ENCODE measurements at regions of chr15 and their contacts with region 1.

Region 1: DNA sequence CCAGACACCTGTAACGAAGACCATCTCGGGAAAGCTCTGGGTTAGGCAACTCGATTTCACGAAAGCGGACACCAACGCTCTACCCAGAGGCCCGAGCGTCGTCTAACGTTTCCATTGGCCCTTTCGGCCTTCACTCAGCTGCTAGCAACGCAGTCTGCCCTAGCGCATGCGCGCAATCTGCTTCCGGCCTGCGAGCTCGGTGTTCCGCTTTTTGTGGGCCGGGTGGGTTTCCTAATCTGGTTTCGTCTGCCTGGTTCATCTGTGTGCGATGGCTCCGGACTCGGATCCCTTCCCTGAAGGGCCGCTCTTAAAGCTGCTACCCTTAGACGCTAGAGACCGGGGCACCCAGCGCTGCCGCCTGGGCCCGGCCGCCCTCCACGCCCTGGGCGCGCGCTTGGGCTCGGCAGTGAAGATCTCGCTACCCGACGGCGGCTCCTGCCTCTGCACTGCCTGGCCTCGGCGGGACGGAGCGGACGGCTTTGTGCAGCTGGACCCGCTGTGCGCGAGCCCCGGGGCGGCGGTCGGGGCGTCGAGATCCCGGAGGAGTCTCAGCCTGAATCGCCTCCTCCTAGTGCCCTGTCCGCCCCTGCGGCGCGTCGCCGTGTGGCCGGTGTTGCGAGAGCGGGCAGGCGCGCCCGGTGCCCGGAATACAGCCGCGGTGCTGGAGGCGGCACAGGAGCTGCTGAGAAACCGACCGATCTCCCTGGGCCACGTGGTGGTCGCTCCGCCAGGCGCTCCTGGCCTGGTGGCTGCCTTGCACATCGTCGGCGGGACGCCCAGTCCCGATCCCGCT is 24.0 kb upstream of the GATM start:
- DNase-seq: peak; percentile 96
- ATAC-seq: peak; percentile 97
- H3K4me3 Mint-ChIP-seq: peak overlapping the region; percentile 97
- H3K27ac Mint-ChIP-seq: peak overlapping the region; percentile 93
- H3K4me1 Mint-ChIP-seq: peaks cover 27% of the 10 kb centered on the region
- H3K27me3 Mint-ChIP-seq: no peaks in the 10 kb centered on the region
- CTCF ChIP-seq: no peak

Region 2: DNA sequence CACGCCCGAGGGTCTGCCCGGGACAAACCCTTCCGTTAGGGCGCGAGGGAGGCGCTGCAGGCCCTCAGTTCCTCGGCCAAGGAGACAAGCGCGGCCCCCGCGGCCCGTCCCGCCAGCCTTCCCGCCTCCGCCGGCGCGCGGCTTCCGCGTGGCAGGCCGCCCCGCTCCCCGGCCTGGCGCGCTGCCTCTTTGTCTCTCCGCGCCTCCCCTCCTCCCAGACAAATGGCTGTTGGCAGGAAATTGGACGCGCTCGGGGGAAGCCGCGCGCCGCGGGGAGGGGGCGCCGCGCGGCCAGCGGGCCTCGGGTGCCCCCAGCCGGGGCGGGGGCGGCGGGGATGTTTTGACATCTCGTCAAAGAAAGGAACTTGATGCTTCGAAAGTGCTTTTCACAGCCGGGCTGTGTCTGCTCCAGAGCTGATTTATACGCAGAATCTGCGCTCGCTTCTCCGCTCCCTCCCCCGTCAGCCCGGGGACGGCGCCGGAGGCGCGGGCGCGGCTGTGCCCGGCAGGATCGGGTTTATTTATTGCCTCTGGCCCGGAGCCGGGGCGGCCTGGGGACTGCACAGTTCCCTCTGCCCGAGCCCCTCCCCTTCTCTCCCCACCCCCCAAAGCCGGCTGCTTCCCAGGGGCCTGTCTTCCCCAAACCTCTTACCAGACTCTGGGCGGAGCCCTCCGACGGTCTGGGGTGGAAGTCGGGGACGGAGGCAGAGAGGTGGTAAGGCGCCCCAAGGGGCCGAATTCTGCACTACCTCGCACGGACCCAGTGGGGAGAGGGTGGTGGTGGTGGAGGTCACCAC is 235.3 kb before region 1 on chr15:
- CTCF ChIA-PET with region 1: interaction called, 27 read pairs
- POLR2A ChIA-PET with region 1: interaction called, 5 read pairs
- intact Hi-C with region 1: no loop called
- DNase-seq: peak; percentile 89
- ATAC-seq: peak; percentile 91
- H3K4me3 Mint-ChIP-seq: peak overlapping the region; percentile 63
- H3K27ac Mint-ChIP-seq: peak overlapping the region; percentile 75
- H3K4me1 Mint-ChIP-seq: peaks cover 14% of the 10 kb centered on the region
- H3K27me3 Mint-ChIP-seq: no peaks in the 10 kb centered on the region
- CTCF ChIP-seq: peak; percentile 70

Region 3: GRCh38 chr15:45198337-45199135 is 203.8 kb before region 1 on chr15:
- CTCF ChIA-PET with region 1: interaction called, 128 read pairs
- POLR2A ChIA-PET with region 1: interaction called, 22 read pairs
- intact Hi-C with region 1: loop called (anchors 5 kb)
- DNase-seq: peak; percentile 95
- ATAC-seq: peak; percentile 66
- H3K4me3 Mint-ChIP-seq: no peak overlapping the region
- H3K27ac Mint-ChIP-seq: no peak overlapping the region
- H3K4me1 Mint-ChIP-seq: peaks cover 8% of the 10 kb centered on the region
- H3K27me3 Mint-ChIP-seq: peaks cover 3% of the 10 kb centered on the region
- CTCF ChIP-seq: peak; percentile 68

Region 4: GRCh38 chr15:45326741-45327140 is 75.6 kb before region 1 on chr15:
- CTCF ChIA-PET with region 1: no interaction called
- POLR2A ChIA-PET with region 1: no interaction called
- intact Hi-C with region 1: no loop called
- DNase-seq: no peak
- ATAC-seq: no peak
- H3K4me3 Mint-ChIP-seq: no peak overlapping the region
- H3K27ac Mint-ChIP-seq: no peak overlapping the region
- H3K4me1 Mint-ChIP-seq: no peaks in the 10 kb centered on the region
- H3K27me3 Mint-ChIP-seq: peaks cover 7% of the 10 kb centered on the region
- CTCF ChIP-seq: no peak

Region 5: DNA sequence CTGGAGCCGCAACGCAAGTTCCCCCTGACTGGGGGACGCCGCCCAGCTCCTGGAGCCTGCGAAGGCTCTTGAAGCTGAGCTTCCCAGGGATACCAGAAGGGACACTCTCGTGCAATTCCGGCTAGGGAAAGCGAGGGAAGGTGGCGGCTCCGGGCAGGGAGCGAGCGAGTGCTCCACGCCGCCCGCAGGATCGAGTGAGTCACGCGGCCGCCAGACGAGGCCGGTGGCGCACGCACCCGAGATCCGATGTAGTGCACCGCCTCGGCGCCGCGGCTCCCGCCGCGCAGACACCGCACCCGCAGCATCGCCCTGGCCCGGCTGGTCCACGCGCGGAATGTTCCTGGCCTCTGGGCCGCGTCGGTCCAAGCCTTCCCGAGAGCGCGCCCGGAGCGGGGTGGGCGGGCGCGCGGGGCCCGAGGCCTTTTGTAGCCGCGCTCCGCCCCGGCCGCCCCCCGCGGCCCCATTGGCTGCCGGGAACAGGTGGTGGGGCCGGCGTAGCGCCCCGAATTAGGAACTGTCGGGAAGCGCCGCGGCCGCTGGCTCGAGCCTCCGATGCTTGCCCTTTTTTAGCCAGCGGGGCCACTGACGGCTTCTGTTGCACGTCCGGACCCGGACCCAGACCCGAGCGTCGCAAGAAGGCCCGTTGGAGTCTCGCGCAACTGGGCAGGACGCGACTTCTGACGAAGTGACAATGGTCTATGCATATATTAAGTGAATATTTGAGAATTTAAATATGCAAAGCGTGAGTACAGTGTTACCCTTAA is 24.0 kb before region 1 on chr15 and contains the start of gene GATM:
- CTCF ChIA-PET with region 1: interaction called, 20 read pairs
- POLR2A ChIA-PET with region 1: interaction called, 9 read pairs
- intact Hi-C with region 1: no loop called
- DNase-seq: peak; percentile 59
- ATAC-seq: peak; percentile 72
- H3K4me3 Mint-ChIP-seq: peak within 1 kb of the TSS; percentile 67
- H3K27ac Mint-ChIP-seq: no peak within 1 kb of the TSS
- H3K4me1 Mint-ChIP-seq: peaks cover 15% of the 10 kb centered on the region
- H3K27me3 Mint-ChIP-seq: peaks cover 34% of the 10 kb centered on the region
- CTCF ChIP-seq: no peak
- total RNA-seq, gene GATM: 5.6 to 6.5 TPM

Region 6: DNA sequence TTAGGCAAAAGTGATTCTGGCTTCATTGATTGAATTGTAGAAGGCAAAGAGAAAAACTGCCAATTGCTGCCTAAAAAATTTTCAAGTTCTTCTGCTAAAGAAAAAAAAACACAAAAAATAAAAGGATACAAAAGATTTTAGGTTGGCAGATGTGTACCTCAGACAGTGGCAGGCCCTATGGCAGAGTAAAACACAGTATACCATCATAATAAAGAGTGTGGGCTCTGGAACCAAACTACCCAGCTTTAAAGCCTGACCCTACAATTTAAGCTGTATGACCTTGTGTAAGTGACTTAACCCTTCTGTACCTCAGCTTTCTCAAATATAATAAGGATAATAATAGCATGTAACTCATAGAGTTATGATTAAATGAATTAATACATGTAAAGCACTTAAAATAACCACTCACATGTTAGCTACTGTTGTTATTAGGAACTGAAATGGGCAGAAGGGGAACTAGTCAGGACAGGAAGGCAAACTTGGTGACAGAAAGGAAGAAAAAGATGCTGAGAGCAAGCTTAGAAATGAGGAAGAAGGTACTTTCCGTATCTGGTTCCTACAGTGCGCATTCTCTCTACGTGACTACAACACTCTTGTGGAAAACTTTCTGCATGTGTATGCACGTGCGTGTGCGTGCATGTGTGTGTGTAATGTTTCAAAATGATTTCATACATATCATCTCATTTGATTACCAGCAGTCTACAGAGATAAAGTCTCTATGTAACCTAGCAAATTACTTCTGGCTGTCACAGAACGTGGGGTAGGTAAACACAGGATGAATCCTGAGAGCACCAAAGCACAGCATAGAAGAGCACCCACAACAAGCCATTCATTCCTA is 10.4 kb before region 1 on chr15:
- CTCF ChIA-PET with region 1: interaction called, 25 read pairs
- POLR2A ChIA-PET with region 1: interaction called, 12 read pairs
- intact Hi-C with region 1: no loop called
- DNase-seq: peak; percentile 14
- ATAC-seq: peak; percentile 45
- H3K4me3 Mint-ChIP-seq: no peak overlapping the region
- H3K27ac Mint-ChIP-seq: no peak overlapping the region
- H3K4me1 Mint-ChIP-seq: peaks cover 6% of the 10 kb centered on the region
- H3K27me3 Mint-ChIP-seq: peaks cover 9% of the 10 kb centered on the region
- CTCF ChIP-seq: no peak

Region 7: DNA sequence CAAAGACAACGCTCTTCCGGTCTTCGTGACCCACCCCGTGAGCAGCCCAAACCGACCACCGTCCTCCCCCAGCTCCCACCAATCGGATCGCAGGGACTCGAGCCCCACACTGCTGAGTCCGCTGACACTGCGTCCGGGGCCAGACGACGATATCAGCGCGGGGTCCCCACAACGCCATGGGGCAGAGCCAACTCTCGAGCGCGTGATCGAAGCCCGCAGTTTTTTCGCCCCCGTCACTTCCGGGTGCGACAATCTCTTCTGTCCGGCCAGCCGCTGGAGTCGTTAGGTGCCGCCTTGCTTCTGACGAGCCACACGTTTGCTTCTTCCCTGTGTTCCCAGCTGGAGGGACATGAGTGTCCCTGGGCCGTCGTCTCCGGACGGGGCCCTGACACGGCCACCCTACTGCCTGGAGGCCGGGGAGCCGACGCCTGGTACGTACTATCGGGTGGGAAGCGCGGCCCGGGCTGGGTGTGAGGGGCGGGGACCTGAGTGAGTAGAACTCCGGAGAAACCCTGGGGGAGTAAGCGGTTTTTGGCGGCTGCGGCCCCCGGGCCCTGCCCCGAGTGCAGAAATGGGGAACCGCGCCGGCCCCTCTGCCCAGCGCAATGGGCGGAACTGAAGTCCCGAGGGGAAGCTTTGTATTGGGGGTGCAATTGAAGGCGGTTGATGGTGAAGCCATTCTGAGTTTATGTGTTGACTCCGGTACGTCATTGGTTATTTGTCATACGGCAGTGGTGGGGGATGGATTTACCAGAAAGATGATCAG is 184.9 kb after region 1 on chr15 and contains the start of gene BLOC1S6:
- CTCF ChIA-PET with region 1: interaction called, 6 read pairs
- POLR2A ChIA-PET with region 1: interaction called, 13 read pairs
- intact Hi-C with region 1: no loop called
- DNase-seq: peak; percentile 92
- ATAC-seq: peak; percentile 93
- H3K4me3 Mint-ChIP-seq: peak within 1 kb of the TSS; percentile 99
- H3K27ac Mint-ChIP-seq: peak within 1 kb of the TSS; percentile 100
- H3K4me1 Mint-ChIP-seq: peaks cover 40% of the 10 kb centered on the region
- H3K27me3 Mint-ChIP-seq: no peaks in the 10 kb centered on the region
- CTCF ChIP-seq: no peak
- total RNA-seq, gene BLOC1S6: 43.3 to 46.9 TPM